ENCODE measurements at regions of chr15 and their contacts with region 1.

Region 1: DNA sequence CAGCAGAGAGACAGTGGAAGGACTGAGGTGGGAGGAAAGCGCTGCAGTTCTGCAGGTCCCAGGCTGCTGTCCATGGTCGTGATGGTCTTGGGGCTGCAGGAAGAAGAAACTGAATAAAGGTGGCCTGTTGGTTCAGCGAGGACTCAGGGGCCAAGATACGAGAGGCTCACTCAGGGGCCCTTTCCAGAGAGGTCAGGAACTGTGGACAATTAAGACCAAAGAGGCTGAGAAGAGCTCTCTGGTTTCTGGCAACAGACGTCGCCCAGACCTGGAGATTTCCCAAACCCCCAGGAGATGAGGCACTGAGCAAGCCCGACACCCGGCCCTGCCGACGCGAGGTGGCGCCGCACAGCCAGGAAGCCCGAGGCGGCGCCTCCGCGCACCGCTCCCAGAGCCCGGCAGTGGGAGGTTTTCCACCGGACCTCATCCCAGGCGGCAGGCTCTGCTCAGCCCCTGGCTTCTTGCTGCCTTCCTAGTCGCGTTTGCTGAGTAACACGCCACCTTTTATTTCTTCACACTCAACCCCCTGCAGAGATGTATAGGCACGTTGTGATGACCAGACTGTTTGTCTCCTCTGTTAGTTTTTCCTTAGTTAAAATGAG is 56.4 kb upstream of the ARRDC4 start:
- DNase-seq: peak; percentile 79
- H3K4me3 ChIP-seq: peak overlapping the region in 1 of 2 experiments; percentile 11; a peak in 1 of 4 replicates
- H3K27ac ChIP-seq: no peak overlapping the region
- H3K4me1 ChIP-seq: no peaks in the 10 kb centered on the region
- H3K27me3 ChIP-seq: peaks cover 34% of the 10 kb centered on the region; the same call in 1 of the 2 replicates
- CTCF ChIP-seq: peak; percentile 68
- EP300 ChIP-seq: no peak
- RAD21 ChIP-seq: peak; percentile 66

Region 2: GRCh38 chr15:98177924-98178592 is 274.0 kb after region 1 on chr15:
- CTCF ChIA-PET with region 1: interaction called, 30 read pairs
- POLR2A ChIA-PET with region 1: no interaction called
- DNase-seq: peak; percentile 50
- H3K4me3 ChIP-seq: no peak overlapping the region; a peak in 1 of 4 replicates
- H3K27ac ChIP-seq: no peak overlapping the region
- H3K4me1 ChIP-seq: no peaks in the 10 kb centered on the region
- H3K27me3 ChIP-seq: peaks cover 28% of the 10 kb centered on the region
- CTCF ChIP-seq: peak; percentile 82
- EP300 ChIP-seq: no peak
- RAD21 ChIP-seq: peak; percentile 80

Measured in SK-N-SH (cell line).